ENCODE measurements at regions of chr4 and their contacts with region 1.

Region 1: DNA sequence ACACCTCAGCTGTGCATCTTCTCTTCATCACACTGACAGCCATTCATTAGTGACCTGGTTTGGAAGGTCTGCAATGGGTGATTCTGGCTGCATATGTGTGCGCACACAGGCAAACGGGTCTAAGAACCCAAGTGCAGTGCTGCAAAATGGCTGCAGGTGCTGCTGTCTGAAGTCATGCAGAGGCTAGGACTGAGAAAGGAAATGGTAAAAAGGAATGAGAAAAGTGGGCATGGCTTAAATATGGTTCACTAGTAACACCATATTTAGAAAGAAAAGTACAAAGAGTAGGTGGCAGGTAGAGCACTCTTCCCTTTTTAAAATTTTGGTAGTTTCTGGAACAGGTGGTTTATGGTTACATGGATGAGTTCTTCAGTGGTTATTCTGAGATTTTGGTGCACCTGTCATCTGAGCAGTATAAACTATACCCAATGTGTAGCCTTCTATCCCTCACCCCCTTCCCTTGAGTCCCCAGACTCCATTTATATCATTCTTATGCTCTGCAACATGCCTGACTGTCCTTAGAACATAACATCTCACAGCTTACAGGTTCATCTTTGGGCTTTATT is 78.4 kb downstream of the CCNG2 start:
- DNase-seq: no peak
- CTCF ChIP-seq: no peak

Region 2: GRCh38 chr4:77358315-77358928 is 123.0 kb after region 1 on chr4:
- in situ Hi-C with region 1: loop called (anchors 5 kb)
- DNase-seq: peak; percentile 36
- CTCF ChIP-seq: peak; percentile 71

Region 3: DNA sequence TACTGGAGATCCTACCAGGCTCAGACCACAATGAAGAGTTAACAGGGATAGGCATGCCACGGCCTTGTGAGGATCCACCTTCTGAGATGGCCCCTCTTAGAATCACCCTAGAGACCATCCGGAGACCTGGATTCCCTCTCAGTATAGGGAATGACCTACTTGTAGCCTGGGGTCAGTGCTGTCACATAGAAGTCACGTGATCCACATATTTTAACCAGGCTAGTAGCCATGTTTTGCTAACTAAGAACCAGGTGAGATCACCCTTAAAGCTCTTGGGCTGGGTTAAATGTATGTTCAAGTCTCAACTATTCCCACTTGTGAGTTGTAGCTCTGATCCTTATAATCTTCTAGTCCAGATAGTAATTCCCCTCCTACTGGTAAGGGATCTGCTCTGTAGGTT is 137.0 kb after region 1 on chr4:
- in situ Hi-C with region 1: no loop called
- DNase-seq: no peak
- CTCF ChIP-seq: no peak